ENCODE measurements at regions of chr12 and their contacts with region 1.

Region 1: DNA sequence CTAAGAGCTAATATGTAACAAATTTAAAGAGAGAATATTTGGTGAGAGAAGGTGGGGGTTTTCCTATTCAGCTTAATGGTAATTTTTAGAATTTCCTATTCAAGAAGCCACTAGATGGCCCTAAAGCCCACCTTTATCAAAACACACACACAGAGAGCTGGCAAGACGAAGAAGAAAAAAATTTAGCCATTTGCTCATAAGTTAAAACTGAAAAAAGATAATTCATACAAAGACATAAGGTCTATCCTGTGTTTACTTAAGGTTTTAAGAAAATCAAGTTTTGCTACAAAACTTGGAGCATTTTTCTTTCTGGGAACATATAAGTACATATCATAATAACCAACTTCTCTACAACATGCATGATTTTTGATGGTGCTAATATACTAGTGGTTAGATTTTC is 46.8 kb upstream of the PCED1B start:
- DNase-seq: no peak
- ATAC-seq: peak; percentile 82
- H3K4me3 ChIP-seq: no peak overlapping the region
- H3K27ac ChIP-seq: no peak overlapping the region
- H3K4me1 ChIP-seq: no peaks in the 10 kb centered on the region
- H3K27me3 ChIP-seq: no peaks in the 10 kb centered on the region
- CTCF ChIP-seq: peak in 2 of 3 experiments; percentile 27 to 56; a peak in 2 of 6 replicates
- EP300 ChIP-seq: no peak
- POLR2A ChIP-seq: no peak
- RAD21 ChIP-seq: peak; percentile 82

Region 2: GRCh38 chr12:47021298-47021697 is 11.3 kb before region 1 on chr12:
- CTCF ChIA-PET with region 1: interaction called, 27 read pairs
- POLR2A ChIA-PET with region 1: no interaction called
- RAD21 ChIA-PET with region 1: interaction called, 6 read pairs
- SMC1A ChIA-PET with region 1: interaction called, 5 read pairs
- in situ Hi-C with region 1: no loop called
- intact Hi-C with region 1: no loop called
- DNase-seq: peak; percentile 11
- ATAC-seq: peak; percentile 78
- H3K4me3 ChIP-seq: no peak overlapping the region
- H3K27ac ChIP-seq: no peak overlapping the region
- H3K4me1 ChIP-seq: no peaks in the 10 kb centered on the region
- H3K27me3 ChIP-seq: no peaks in the 10 kb centered on the region
- CTCF ChIP-seq: peak; percentile 50 to 68 (median 66)
- EP300 ChIP-seq: no peak
- POLR2A ChIP-seq: no peak
- RAD21 ChIP-seq: peak; percentile 80

Region 3: DNA sequence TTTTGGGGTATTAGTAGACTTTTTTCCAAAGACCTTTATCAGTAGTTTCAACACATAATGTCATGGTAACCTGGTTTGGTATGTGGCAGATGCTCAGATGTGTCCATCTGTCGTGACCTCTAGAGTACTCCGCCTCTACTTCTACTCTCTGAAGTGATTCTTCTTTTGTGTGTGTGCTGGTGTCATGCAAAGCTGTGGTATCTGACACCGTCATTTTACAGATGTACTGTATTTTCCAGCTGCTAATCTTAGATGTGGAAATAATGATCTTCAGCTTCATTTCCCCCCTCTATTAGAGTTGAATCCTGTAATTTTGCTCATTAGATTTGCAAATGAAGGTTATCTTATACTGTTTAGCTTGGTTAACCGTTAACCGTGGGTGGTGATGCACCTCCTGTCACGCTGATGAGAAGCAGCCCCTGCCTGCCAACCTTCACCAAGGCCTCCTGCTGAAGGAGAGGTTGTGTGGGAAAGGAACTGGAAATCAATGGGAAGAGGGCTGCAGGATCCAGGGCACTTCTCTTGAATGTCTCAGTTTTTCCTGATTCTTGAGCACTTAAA is 269.5 kb after region 1 on chr12:
- CTCF ChIA-PET with region 1: interaction called, 56 read pairs
- POLR2A ChIA-PET with region 1: no interaction called
- RAD21 ChIA-PET with region 1: interaction called, 31 read pairs
- SMC1A ChIA-PET with region 1: interaction called, 31 read pairs
- in situ Hi-C with region 1: loop called (anchors 5 kb)
- intact Hi-C with region 1: loop called (anchors 1 kb)
- DNase-seq: no peak
- ATAC-seq: peak; percentile 88
- H3K4me3 ChIP-seq: no peak overlapping the region
- H3K27ac ChIP-seq: no peak overlapping the region
- H3K4me1 ChIP-seq: no peaks in the 10 kb centered on the region
- H3K27me3 ChIP-seq: no peaks in the 10 kb centered on the region
- CTCF ChIP-seq: no peak
- EP300 ChIP-seq: no peak
- POLR2A ChIP-seq: no peak
- RAD21 ChIP-seq: no peak

Region 4: DNA sequence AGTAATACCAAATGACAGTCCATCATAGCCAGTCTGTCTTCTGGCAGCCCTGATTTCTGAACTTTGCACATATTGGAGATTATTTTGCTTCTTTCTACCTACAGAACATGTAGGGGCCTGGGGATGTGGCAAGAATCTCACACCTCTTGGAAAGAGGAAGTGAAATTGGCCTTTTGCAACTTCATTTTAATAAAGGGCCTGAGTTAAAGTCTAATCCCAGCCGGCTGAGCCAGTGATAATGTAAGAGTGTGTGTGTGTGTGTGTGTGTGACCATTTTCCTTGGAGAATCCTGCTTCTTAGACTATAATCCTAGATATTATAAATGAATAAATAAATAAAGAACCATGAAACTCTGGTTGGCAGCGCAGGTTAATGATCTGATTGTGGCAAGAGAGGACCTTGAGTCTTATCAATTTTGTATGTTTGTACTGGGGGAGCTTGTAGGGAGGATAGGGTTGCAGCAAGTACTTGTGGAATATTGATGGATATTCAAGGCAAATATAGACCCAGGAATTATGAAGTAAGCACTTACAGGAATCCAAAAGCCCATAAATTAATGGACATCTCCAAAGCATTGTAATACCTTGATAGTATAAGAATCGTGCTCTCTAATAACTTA is 280.3 kb after region 1 on chr12:
- CTCF ChIA-PET with region 1: interaction called, 56 read pairs
- POLR2A ChIA-PET with region 1: no interaction called
- RAD21 ChIA-PET with region 1: interaction called, 31 read pairs
- SMC1A ChIA-PET with region 1: interaction called, 31 read pairs
- in situ Hi-C with region 1: loop called (anchors 5 kb)
- intact Hi-C with region 1: no loop called
- DNase-seq: no peak
- ATAC-seq: peak; percentile 96
- H3K4me3 ChIP-seq: no peak overlapping the region
- H3K27ac ChIP-seq: no peak overlapping the region
- H3K4me1 ChIP-seq: peaks cover 4% of the 10 kb centered on the region; the same call in 1 of the 2 replicates
- H3K27me3 ChIP-seq: no peaks in the 10 kb centered on the region
- CTCF ChIP-seq: no peak
- EP300 ChIP-seq: peak in 1 of 2 experiments; percentile 60; a peak in 1 of 4 replicates
- POLR2A ChIP-seq: no peak
- RAD21 ChIP-seq: no peak

Region 5: DNA sequence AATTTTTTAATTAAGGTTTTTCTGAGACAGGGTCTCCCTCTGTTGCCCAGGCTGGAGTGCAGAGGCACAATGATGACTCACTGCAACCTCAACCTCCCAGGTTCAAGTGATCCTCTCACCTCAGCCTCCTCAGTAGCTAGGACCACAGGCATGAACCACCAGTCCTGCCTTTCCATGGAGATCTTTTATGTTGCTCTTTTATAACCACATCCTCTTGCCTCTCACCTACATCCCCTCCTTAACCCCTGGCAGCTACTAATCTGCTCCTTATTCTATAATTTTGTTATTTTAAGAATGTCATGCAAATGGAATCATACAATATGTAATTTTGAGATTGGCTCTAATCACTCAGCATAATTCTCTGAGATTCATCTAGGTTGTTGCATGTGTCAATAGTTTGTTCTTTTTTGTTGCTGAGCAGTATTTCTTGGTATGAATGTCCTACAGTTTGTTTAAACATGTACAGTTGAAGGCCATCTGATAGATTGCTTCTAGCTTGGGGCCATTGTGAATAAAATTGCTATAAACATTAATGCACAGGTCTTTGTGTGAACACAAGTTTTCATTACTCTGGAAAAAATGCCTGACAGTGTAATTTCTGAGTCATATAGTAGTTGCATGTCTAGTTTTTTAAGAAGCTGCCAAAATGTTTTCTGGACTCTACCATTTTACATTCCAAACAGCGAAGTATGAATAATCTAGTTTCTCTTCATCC is 296.3 kb after region 1 on chr12:
- CTCF ChIA-PET with region 1: no interaction called
- POLR2A ChIA-PET with region 1: no interaction called
- RAD21 ChIA-PET with region 1: no interaction called
- SMC1A ChIA-PET with region 1: no interaction called
- in situ Hi-C with region 1: no loop called
- intact Hi-C with region 1: no loop called
- DNase-seq: no peak
- ATAC-seq: no peak
- H3K4me3 ChIP-seq: no peak overlapping the region
- H3K27ac ChIP-seq: no peak overlapping the region
- H3K4me1 ChIP-seq: no peaks in the 10 kb centered on the region
- H3K27me3 ChIP-seq: no peaks in the 10 kb centered on the region
- CTCF ChIP-seq: no peak
- EP300 ChIP-seq: no peak
- POLR2A ChIP-seq: no peak
- RAD21 ChIP-seq: no peak

Region 6: GRCh38 chr12:47408171-47408871 is 375.7 kb after region 1 on chr12:
- CTCF ChIA-PET with region 1: interaction called, 16 read pairs
- POLR2A ChIA-PET with region 1: no interaction called
- RAD21 ChIA-PET with region 1: interaction called, 13 read pairs
- SMC1A ChIA-PET with region 1: interaction called, 10 read pairs
- in situ Hi-C with region 1: no loop called
- intact Hi-C with region 1: loop called (anchors 1 kb)
- DNase-seq: peak; percentile 40
- ATAC-seq: peak; percentile 97
- H3K4me3 ChIP-seq: no peak overlapping the region
- H3K27ac ChIP-seq: no peak overlapping the region
- H3K4me1 ChIP-seq: no peaks in the 10 kb centered on the region
- H3K27me3 ChIP-seq: no peaks in the 10 kb centered on the region; a peak in 1 of 4 replicates
- CTCF ChIP-seq: peak; percentile 49 to 66 (median 52)
- EP300 ChIP-seq: peak in 1 of 2 experiments; percentile 49; a peak in 1 of 4 replicates
- POLR2A ChIP-seq: no peak
- RAD21 ChIP-seq: peak; percentile 72

Region 7: GRCh38 chr12:47651368-47652254 is 619.0 kb after region 1 on chr12:
- CTCF ChIA-PET with region 1: interaction called, 5 read pairs
- POLR2A ChIA-PET with region 1: no interaction called
- RAD21 ChIA-PET with region 1: no interaction called
- SMC1A ChIA-PET with region 1: interaction called, 6 read pairs
- in situ Hi-C with region 1: no loop called
- intact Hi-C with region 1: loop called (anchors 10 kb)
- DNase-seq: peak; percentile 23
- ATAC-seq: peak; percentile 96
- H3K4me3 ChIP-seq: no peak overlapping the region
- H3K27ac ChIP-seq: no peak overlapping the region
- H3K4me1 ChIP-seq: peaks cover 13% of the 10 kb centered on the region
- H3K27me3 ChIP-seq: no peaks in the 10 kb centered on the region
- CTCF ChIP-seq: peak; percentile 57 to 72 (median 67)
- EP300 ChIP-seq: no peak
- POLR2A ChIP-seq: no peak
- RAD21 ChIP-seq: peak; percentile 67

Region 8: DNA sequence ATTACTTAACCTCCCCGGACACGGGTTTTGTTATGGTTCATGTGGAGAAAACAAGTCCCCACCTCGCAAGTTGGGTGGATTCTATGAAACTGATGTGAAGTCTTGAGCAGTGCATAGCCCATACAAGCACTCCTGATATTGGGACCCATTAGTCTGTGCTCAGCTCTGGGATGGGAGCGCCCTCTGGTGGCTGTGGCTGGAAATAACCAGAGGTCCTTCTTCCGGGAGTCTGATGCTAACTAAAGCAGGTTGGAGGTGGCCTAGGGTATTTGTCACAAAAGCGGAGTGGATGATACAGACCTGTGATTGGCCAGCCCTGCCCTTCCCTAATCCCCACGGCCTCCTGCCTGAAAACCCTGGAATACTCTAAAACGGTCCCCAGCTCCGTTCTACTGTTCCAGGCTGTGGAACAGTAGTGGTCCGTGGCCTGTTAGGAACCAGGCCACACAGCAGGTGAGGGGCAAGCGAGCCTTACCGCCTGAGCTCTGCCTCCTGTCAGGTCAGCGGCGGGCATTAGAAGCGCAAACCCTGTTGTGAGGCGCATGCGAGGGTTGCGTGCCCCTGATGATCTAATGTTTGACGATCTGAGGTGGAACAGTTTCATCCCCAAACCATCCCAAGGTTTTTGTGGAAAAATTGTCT is 746.8 kb after region 1 on chr12:
- CTCF ChIA-PET with region 1: no interaction called
- POLR2A ChIA-PET with region 1: no interaction called
- RAD21 ChIA-PET with region 1: no interaction called
- SMC1A ChIA-PET with region 1: no interaction called
- in situ Hi-C with region 1: no loop called
- intact Hi-C with region 1: loop called (anchors 10 kb)
- DNase-seq: peak; percentile 53
- ATAC-seq: peak; percentile 95
- H3K4me3 ChIP-seq: no peak overlapping the region
- H3K27ac ChIP-seq: no peak overlapping the region
- H3K4me1 ChIP-seq: peaks cover 11% of the 10 kb centered on the region; the same call in 1 of the 2 replicates
- H3K27me3 ChIP-seq: no peaks in the 10 kb centered on the region
- CTCF ChIP-seq: peak; percentile 92 to 97 (median 95)
- EP300 ChIP-seq: no peak
- POLR2A ChIP-seq: no peak; the same call in none of the 2 replicates
- RAD21 ChIP-seq: peak; percentile 95